Activated naive CD4-positive, alpha-beta T cell treated with anti-CD3 and anti-CD28 coated beads, Interleukin-2, amount 10 ng/mL, durations not matched to agents 7 days and 5 days (primary cell): ENCODE measurements at regions of chr7 and their contacts with region 1.

Region 1: DNA sequence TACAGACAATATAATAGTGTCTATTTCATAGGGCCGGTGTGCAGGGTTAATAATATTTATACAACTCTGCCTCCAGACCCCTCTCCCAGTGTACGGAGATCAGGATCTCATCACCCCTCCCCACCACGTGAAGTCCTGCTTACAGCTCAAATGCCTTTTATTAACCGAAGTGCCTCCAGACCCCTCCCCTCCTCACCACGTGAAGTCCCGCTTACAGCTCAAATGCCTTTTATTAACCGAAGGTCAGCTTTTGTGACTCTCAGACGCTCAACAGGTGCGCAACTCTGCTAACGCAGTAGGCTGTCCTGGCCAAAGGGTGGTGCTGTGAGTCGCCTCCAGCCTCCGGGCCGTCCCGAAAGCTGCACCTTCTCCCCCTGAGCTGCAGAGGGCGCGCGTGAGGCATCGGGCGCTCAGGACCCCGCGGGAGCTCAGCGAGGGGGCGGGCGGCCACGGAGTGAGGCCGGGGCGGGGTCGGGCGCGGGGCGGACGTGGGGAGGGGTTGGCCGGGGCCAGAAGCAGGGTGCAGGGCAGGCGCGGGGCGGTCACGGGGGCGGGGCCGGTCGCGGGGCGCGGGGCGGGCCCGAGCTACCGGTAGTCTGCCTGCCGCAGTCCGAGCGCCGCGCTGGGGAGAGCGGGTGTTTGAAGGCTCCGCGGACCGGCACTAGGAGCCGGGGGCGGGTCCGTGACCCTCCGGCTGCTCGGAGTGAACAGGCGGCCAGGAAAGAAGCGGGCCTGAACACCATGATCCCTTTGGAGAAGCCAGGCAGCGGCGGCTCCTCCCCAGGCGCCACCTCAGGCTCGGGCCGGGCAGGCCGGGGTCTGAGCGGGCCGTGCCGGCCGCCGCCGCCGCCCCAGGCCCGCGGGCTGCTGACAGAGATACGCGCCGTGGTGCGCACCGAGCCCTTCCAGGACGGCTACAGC is at the start of gene STK17A:
- DNase-seq: peak; percentile 93
- H3K4me3 Mint-ChIP-seq: peak within 1 kb of the TSS; percentile 97
- H3K27ac Mint-ChIP-seq: peak within 1 kb of the TSS; percentile 99
- H3K4me1 Mint-ChIP-seq: peaks cover 31% of the 10 kb centered on the region
- H3K27me3 Mint-ChIP-seq: peaks cover 18% of the 10 kb centered on the region

Region 2: DNA sequence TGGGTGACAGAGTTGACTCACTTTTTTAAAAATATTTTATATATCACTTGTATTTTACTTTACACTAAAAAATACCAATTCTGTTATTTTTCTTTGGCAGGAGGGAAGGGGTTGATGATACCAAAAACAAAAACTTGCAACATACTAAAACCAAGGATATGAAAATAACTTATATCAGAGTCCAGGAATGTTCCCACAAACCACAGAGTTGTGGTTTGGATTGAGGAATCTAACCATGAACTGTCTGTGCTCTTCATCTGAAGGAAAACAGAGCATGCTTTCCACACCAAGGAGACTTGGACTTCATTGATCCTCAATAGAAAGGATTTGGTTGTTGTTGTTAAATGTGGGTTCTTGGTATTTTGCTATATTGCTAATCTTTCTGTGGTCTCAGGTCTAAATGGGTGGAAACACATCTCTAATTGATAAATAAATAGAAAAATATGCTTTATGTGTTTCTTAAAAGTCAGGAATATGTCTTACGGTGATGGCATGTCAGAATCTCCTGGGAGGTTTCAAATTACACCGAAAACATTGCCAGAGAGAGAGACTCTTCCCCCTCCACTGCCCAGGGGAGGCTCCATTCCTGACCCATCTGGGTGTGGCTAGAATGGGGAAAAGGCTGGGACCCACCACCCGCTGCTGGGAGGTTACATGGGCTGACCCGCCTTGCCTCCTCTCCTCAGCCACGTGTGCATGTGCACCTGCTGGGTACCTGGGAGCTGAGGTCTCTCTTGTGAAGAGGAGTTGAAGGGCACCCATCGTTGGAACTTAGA is 46.8 kb before region 1 on chr7:
- CTCF ChIA-PET with region 1: no interaction called
- DNase-seq: no peak
- H3K4me3 Mint-ChIP-seq: no peak overlapping the region
- H3K27ac Mint-ChIP-seq: no peak overlapping the region
- H3K4me1 Mint-ChIP-seq: no peaks in the 10 kb centered on the region
- H3K27me3 Mint-ChIP-seq: peaks cover 19% of the 10 kb centered on the region

Region 3: DNA sequence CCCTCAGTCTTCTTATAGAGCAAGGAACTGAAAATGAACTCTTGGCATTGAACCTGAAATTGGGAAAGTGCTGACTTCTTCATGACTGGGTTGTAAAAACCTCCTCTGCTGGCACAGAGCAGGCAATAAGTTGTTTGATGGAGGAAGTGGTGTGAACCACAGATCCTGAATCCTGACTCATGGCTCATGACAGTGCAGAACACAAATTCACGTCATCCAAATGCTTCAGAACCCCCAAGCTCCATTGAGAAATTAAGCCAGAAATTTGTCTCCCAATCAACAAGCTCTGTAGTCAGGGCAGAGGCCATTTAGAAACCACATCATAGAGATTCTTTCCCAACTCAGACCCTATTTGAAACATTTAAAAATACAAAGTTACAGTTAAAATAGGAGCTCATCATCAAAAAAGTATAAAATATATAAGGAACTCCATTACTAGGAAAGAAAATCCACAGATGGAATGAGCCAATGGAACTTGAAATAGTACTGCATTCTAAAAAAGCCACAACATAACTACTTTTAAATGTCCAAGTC is 10.2 kb before region 1 on chr7:
- CTCF ChIA-PET with region 1: interaction called, 49 read pairs
- DNase-seq: peak; percentile 49
- H3K4me3 Mint-ChIP-seq: no peak overlapping the region
- H3K27ac Mint-ChIP-seq: no peak overlapping the region
- H3K4me1 Mint-ChIP-seq: peaks cover 27% of the 10 kb centered on the region
- H3K27me3 Mint-ChIP-seq: peaks cover 6% of the 10 kb centered on the region

Region 4: GRCh38 chr7:43625453-43625852 is 42.7 kb after region 1 on chr7:
- CTCF ChIA-PET with region 1: interaction called, 39 read pairs
- DNase-seq: peak; percentile 56
- H3K4me3 Mint-ChIP-seq: no peak overlapping the region
- H3K27ac Mint-ChIP-seq: peak overlapping the region; percentile 80
- H3K4me1 Mint-ChIP-seq: peaks cover 91% of the 10 kb centered on the region
- H3K27me3 Mint-ChIP-seq: no peaks in the 10 kb centered on the region

Region 5: GRCh38 chr7:43693687-43694398 is 111.1 kb after region 1 on chr7:
- CTCF ChIA-PET with region 1: interaction called, 393 read pairs
- DNase-seq: no peak
- H3K4me3 Mint-ChIP-seq: no peak overlapping the region
- H3K27ac Mint-ChIP-seq: no peak overlapping the region
- H3K4me1 Mint-ChIP-seq: peaks cover 33% of the 10 kb centered on the region
- H3K27me3 Mint-ChIP-seq: no peaks in the 10 kb centered on the region

Region 6: DNA sequence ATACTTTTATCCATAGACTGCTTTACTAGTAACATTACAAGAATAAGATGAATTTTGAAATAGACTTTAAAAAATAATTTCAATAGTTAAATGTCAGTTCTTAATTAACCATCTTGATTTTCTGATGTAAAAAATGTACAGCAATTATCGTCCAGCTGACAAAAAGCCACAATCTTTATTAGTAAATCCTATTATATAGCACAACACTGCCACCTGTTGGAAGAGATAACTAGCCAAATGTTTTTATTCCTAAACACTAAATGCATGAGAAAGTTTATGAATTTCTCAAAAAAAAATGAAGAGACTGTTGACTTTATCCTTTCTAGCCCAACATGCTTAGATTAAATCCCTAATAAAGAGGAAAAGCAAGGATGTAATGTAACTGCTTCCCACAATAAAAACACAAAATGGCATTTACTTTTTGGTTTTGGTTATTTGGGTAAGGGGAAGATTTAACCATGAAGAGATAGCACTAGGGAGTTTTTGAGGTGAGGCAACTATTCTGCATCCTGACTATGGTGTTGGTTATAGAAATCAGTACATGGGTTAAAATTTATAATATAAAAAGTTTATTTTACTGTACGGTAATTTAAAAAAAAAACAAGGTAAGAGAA is 138.5 kb after region 1 on chr7:
- CTCF ChIA-PET with region 1: interaction called, 85 read pairs
- DNase-seq: no peak
- H3K4me3 Mint-ChIP-seq: no peak overlapping the region
- H3K27ac Mint-ChIP-seq: no peak overlapping the region
- H3K4me1 Mint-ChIP-seq: peaks cover 12% of the 10 kb centered on the region
- H3K27me3 Mint-ChIP-seq: no peaks in the 10 kb centered on the region

Region 7: GRCh38 chr7:43799589-43799988 is 216.8 kb after region 1 on chr7:
- CTCF ChIA-PET with region 1: interaction called, 15 read pairs
- DNase-seq: no peak
- H3K4me3 Mint-ChIP-seq: no peak overlapping the region
- H3K27ac Mint-ChIP-seq: no peak overlapping the region
- H3K4me1 Mint-ChIP-seq: peaks cover 2% of the 10 kb centered on the region
- H3K27me3 Mint-ChIP-seq: no peaks in the 10 kb centered on the region